ENCODE measurements at regions of chrX and their contacts with region 1.

Region 1: GRCh38 chrX:12946838-12947544 is 27.9 kb upstream of the TMSB4X start:
- DNase-seq: peak; percentile 83
- ATAC-seq: peak; percentile 19
- H3K4me3 Mint-ChIP-seq: peak overlapping the region; percentile 65
- H3K27ac Mint-ChIP-seq: peak overlapping the region; percentile 95
- H3K4me1 Mint-ChIP-seq: peaks cover 47% of the 10 kb centered on the region
- H3K27me3 Mint-ChIP-seq: no peaks in the 10 kb centered on the region
- CTCF ChIP-seq: peak; percentile 87

Region 2: DNA sequence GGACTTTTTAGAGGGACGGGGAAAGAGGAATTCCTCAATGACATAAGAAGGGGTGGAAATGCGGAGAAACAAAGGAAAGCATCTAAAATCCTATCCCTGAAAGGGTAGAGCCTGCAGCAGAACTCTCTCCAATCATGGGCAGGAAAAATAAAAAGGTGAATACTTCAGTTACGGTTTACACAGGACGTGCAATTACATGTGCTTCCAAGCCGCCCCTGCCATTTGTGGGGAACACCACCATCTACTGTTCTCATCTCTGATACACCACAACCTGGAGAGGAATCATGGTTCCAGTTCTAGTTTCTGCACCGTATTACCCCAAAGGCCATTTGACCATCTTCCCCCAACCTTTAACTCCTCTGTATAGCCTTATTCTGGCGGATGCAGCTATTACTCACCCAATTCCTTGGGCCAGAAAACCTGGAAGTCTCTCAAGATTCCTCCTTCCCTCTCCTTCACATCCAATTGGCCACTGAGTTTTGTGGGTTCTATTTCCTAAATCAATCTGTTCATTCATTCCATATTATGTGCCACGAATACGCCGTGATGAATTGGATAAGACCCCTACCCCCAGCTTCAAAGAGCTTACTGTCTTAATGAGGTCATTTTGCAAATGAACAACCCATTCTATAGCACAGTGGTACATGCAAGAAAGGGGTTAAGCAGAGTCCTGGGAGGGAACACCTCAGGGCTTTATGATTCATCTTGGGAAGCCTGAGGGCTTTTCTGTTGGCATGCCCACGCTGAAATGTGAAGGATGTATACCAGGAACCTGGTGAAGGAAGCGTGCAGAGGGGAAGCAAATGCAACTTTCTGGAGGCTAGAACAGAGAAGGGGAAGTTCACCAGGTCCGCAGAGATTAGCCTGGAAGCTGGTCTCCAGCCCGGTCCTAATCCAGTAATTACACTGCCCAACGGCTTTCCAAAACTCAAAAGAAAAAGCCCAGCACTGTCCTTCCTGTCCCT is 1190.4 kb before region 1 on chrX:
- CTCF ChIA-PET with region 1: no interaction called
- POLR2A ChIA-PET with region 1: no interaction called
- intact Hi-C with region 1: no loop called
- DNase-seq: no peak
- ATAC-seq: no peak
- H3K4me3 Mint-ChIP-seq: peak overlapping the region; percentile 62
- H3K27ac Mint-ChIP-seq: no peak overlapping the region
- H3K4me1 Mint-ChIP-seq: peaks cover 10% of the 10 kb centered on the region
- H3K27me3 Mint-ChIP-seq: no peaks in the 10 kb centered on the region
- CTCF ChIP-seq: no peak

Region 3: GRCh38 chrX:12936947-12937346 is 10.0 kb before region 1 on chrX:
- CTCF ChIA-PET with region 1: interaction called, 22 read pairs
- POLR2A ChIA-PET with region 1: no interaction called
- intact Hi-C with region 1: no loop called
- DNase-seq: no peak
- ATAC-seq: no peak
- H3K4me3 Mint-ChIP-seq: no peak overlapping the region
- H3K27ac Mint-ChIP-seq: no peak overlapping the region
- H3K4me1 Mint-ChIP-seq: no peaks in the 10 kb centered on the region
- H3K27me3 Mint-ChIP-seq: no peaks in the 10 kb centered on the region
- CTCF ChIP-seq: no peak

Region 4: DNA sequence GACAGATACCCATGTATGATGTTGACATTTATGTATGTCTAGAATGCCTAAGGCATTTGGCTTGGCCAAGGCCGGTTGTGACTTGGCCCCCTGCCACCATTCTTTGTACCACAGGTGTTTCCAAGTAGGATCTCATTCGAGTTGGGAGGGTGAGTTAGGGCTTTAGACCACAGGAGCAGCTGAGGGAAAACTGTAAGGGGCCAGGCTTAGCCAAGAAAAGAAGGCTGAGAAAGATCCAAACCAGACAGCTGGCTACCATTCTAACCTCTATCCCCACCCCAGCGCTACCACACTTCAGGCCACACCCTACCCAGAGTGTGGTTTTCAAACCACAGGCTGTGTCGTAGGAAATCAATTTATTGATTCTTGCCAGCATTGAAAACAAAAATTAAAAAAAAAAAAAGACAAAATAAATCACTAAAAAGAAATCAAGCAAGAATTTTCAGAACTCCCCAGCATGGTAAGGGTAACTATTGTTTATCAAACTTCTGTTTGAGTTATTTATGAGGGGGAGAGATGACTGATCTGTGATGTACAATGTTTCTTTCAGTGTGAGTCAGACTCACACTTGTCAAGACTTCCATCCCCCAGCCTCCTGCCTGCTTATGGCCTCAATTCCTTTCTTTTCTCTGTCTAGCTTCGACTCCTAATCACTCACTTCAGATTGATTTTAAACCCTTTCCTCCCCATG is 37.8 kb after region 1 on chrX:
- CTCF ChIA-PET with region 1: interaction called, 20 read pairs
- POLR2A ChIA-PET with region 1: interaction called, 621 read pairs
- intact Hi-C with region 1: loop called (anchors 5 kb)
- DNase-seq: peak; percentile 66
- ATAC-seq: peak; percentile 81
- H3K4me3 Mint-ChIP-seq: peak overlapping the region; percentile 50
- H3K27ac Mint-ChIP-seq: peak overlapping the region; percentile 97
- H3K4me1 Mint-ChIP-seq: peaks cover 74% of the 10 kb centered on the region
- H3K27me3 Mint-ChIP-seq: no peaks in the 10 kb centered on the region
- CTCF ChIP-seq: no peak

Region 5: GRCh38 chrX:13051529-13052172 is 104.7 kb after region 1 on chrX:
- CTCF ChIA-PET with region 1: interaction called, 11 read pairs
- POLR2A ChIA-PET with region 1: interaction called, 3 read pairs
- intact Hi-C with region 1: no loop called
- DNase-seq: no peak
- ATAC-seq: peak; percentile 69
- H3K4me3 Mint-ChIP-seq: no peak overlapping the region
- H3K27ac Mint-ChIP-seq: peak overlapping the region; percentile 88
- H3K4me1 Mint-ChIP-seq: peaks cover 73% of the 10 kb centered on the region
- H3K27me3 Mint-ChIP-seq: no peaks in the 10 kb centered on the region
- CTCF ChIP-seq: no peak

Region 6: GRCh38 chrX:13428055-13428786 is 481.2 kb after region 1 on chrX:
- CTCF ChIA-PET with region 1: interaction called, 10 read pairs
- POLR2A ChIA-PET with region 1: no interaction called
- intact Hi-C with region 1: no loop called
- DNase-seq: peak; percentile 67
- ATAC-seq: peak; percentile 88
- H3K4me3 Mint-ChIP-seq: no peak overlapping the region
- H3K27ac Mint-ChIP-seq: peak overlapping the region; percentile 25
- H3K4me1 Mint-ChIP-seq: peaks cover 14% of the 10 kb centered on the region
- H3K27me3 Mint-ChIP-seq: no peaks in the 10 kb centered on the region
- CTCF ChIP-seq: no peak

Measured in activated CD8-positive, alpha-beta T cell treated with anti-CD3 and anti-CD28 coated beads for 36 hours (primary cell).